ENCODE measurements at regions of chr6 and their contacts with region 1.

Region 1: GRCh38 chr6:36196880-36197548 is 470 bp downstream of the BRPF3 start:
- DNase-seq: peak; percentile 100
- ATAC-seq: peak; percentile 90 to 97 (median 90)
- H3K4me3 ChIP-seq: peak overlapping the region; percentile 50
- H3K4me3 Mint-ChIP-seq: peak overlapping the region; percentile 87
- H3K27ac ChIP-seq: peak overlapping the region; percentile 76
- H3K27ac Mint-ChIP-seq: peak overlapping the region; percentile 79 to 91
- H3K4me1 ChIP-seq: peaks cover 31% of the 10 kb centered on the region
- H3K4me1 Mint-ChIP-seq: peaks cover 36 to 37% of the 10 kb centered on the region in 2 donors
- H3K27me3 ChIP-seq: no peaks in the 10 kb centered on the region
- H3K27me3 Mint-ChIP-seq: no peaks in the 10 kb centered on the region
- CTCF ChIP-seq: no peak

Region 2: GRCh38 chr6:36094753-36095496 is 102.1 kb before region 1 on chr6:
- intact Hi-C with region 1: loop called (anchors 2 kb)
- DNase-seq: peak; percentile 80 to 93
- ATAC-seq: peak; percentile 59 to 79 (median 61)
- H3K4me3 ChIP-seq: no peak overlapping the region
- H3K4me3 Mint-ChIP-seq: no peak overlapping the region
- H3K27ac ChIP-seq: no peak overlapping the region
- H3K27ac Mint-ChIP-seq: peak overlapping the region; percentile 80 to 96
- H3K4me1 ChIP-seq: peaks cover 20% of the 10 kb centered on the region
- H3K4me1 Mint-ChIP-seq: peaks cover 43 to 45% of the 10 kb centered on the region in 2 donors
- H3K27me3 ChIP-seq: no peaks in the 10 kb centered on the region
- H3K27me3 Mint-ChIP-seq: no peaks in the 10 kb centered on the region
- CTCF ChIP-seq: peak; percentile 94

Region 3: DNA sequence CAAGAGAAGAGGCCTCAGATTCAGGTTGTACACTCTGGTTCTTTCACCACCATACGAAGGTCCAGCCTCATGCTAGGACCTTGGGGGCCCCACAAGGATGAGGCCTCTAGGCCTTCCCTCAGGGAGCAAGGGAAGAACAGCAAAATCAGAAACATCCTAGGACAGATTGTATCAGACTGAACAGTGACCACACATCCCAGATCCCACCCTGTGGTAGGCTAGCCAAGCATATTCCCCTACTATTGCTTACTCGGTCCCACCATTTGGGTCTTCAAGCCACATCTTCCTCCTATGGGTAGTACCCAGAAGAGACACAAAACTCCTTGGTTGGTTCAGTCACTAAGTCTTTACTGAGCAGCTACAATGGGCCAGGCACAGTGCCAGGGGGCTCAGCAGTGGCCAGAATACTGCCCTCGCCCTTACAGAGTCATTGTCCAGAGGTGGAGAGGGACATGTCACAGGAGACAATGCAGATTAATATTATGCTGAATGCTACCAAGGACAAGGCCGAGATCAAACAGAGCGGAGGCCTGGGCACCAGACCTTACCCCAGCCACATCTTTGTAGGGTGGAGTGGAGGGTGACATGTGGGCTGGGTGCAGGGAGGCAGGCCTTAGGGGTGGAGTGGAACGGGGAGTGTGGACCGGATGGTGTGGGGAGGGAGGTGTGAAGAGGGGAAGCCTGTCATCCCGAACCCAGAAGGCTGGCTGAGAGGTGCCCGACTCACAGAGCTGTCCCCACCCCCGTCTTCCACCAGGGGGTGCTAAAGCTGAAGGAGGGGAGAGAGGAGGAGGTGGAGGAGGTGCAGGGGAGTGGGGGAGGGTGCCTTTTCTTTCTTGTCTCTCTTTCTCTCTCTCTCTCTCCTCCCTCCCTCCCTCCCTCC is 73.5 kb before region 1 on chr6:
- intact Hi-C with region 1: loop called (anchors 1 kb)
- DNase-seq: peak; percentile 87 to 96
- ATAC-seq: peak; percentile 72 to 88 (median 87)
- H3K4me3 ChIP-seq: no peak overlapping the region
- H3K4me3 Mint-ChIP-seq: peak overlapping the region; percentile 64
- H3K27ac ChIP-seq: peak overlapping the region; percentile 69
- H3K27ac Mint-ChIP-seq: peak overlapping the region; percentile 100
- H3K4me1 ChIP-seq: peaks cover 88% of the 10 kb centered on the region
- H3K4me1 Mint-ChIP-seq: peaks cover 68 to 96% of the 10 kb centered on the region in 2 donors
- H3K27me3 ChIP-seq: no peaks in the 10 kb centered on the region
- H3K27me3 Mint-ChIP-seq: no peaks in the 10 kb centered on the region
- CTCF ChIP-seq: peak; percentile 64

Region 4: GRCh38 chr6:36666726-36667591 is 469.9 kb after region 1 on chr6:
- intact Hi-C with region 1: no loop called
- DNase-seq: no peak
- ATAC-seq: peak in 1 of 3 donors; percentile 2
- H3K4me3 ChIP-seq: no peak overlapping the region
- H3K4me3 Mint-ChIP-seq: no peak overlapping the region
- H3K27ac ChIP-seq: no peak overlapping the region
- H3K27ac Mint-ChIP-seq: no peak overlapping the region
- H3K4me1 ChIP-seq: no peaks in the 10 kb centered on the region
- H3K4me1 Mint-ChIP-seq: no peaks in the 10 kb centered on the region
- H3K27me3 ChIP-seq: no peaks in the 10 kb centered on the region
- H3K27me3 Mint-ChIP-seq: peaks cover 5 to 9% of the 10 kb centered on the region in 2 donors
- CTCF ChIP-seq: no peak

Measured in natural killer cell (primary cell).